ENCODE measurements at regions of chr7 and their contacts with region 1.

Region 1: DNA sequence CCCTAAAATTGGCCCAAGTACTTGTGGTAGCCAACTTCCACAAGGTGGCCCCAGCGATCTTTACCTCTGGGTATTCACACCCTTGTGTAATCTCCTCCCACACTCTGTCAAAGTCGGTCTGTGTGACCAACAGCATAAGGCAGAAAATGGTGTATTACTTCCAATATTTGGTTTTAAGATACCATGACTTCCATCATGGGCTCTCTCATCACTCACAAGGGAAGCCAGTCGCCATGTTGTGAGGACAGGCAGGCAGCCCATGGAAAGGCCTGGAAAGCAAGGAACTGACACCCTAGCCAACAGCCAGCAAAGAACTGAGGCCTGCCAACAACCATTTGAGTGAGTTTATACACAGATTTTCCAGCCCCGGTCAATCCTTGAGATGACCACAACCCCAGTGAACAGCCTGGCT is 91.0 kb upstream of the KMT2E start:
- DNase-seq: peak; percentile 74
- H3K4me3 ChIP-seq: no peak overlapping the region; a peak in 1 of 4 replicates
- H3K27ac ChIP-seq: no peak overlapping the region; a peak in 1 of 4 replicates
- H3K4me1 ChIP-seq: no peaks in the 10 kb centered on the region; a peak in 2 of 4 replicates
- H3K27me3 ChIP-seq: no peaks in the 10 kb centered on the region; the same call in 1 of the 2 replicates
- CTCF ChIP-seq: peak; percentile 92
- EP300 ChIP-seq: 0 out of 4 replicates have a peak, but pooled peaks of 1 of the 2 experiments have one; percentile 12
- RAD21 ChIP-seq: peak; percentile 99

Region 2: GRCh38 chr7:103524042-103524907 is 1398.7 kb before region 1 on chr7:
- CTCF ChIA-PET with region 1: interaction called, 11 read pairs
- POLR2A ChIA-PET with region 1: no interaction called
- DNase-seq: peak; percentile 72
- H3K4me3 ChIP-seq: no peak overlapping the region; a peak in 1 of 4 replicates
- H3K27ac ChIP-seq: no peak overlapping the region
- H3K4me1 ChIP-seq: peaks cover 0 to 5% of the 10 kb centered on the region in 2 experiments; a peak in 1 of 4 replicates
- H3K27me3 ChIP-seq: no peaks in the 10 kb centered on the region
- CTCF ChIP-seq: peak; percentile 77
- EP300 ChIP-seq: no peak
- RAD21 ChIP-seq: peak; percentile 99

Region 3: GRCh38 chr7:104469166-104469820 is 453.7 kb before region 1 on chr7:
- CTCF ChIA-PET with region 1: no interaction called
- POLR2A ChIA-PET with region 1: no interaction called
- DNase-seq: no peak
- H3K4me3 ChIP-seq: no peak overlapping the region
- H3K27ac ChIP-seq: no peak overlapping the region
- H3K4me1 ChIP-seq: no peaks in the 10 kb centered on the region
- H3K27me3 ChIP-seq: peaks cover 15% of the 10 kb centered on the region; the same call in 1 of the 2 replicates
- CTCF ChIP-seq: no peak
- EP300 ChIP-seq: no peak
- RAD21 ChIP-seq: no peak

Region 4: GRCh38 chr7:104862719-104863118 is 60.3 kb before region 1 on chr7:
- CTCF ChIA-PET with region 1: interaction called, 28 read pairs
- POLR2A ChIA-PET with region 1: no interaction called
- DNase-seq: peak; percentile 63
- H3K4me3 ChIP-seq: no peak overlapping the region
- H3K27ac ChIP-seq: no peak overlapping the region
- H3K4me1 ChIP-seq: peaks cover 0 to 4% of the 10 kb centered on the region in 2 experiments; a peak in 1 of 4 replicates
- H3K27me3 ChIP-seq: peaks cover 54% of the 10 kb centered on the region
- CTCF ChIP-seq: peak; percentile 58
- EP300 ChIP-seq: no peak
- RAD21 ChIP-seq: peak; percentile 66

Region 5: DNA sequence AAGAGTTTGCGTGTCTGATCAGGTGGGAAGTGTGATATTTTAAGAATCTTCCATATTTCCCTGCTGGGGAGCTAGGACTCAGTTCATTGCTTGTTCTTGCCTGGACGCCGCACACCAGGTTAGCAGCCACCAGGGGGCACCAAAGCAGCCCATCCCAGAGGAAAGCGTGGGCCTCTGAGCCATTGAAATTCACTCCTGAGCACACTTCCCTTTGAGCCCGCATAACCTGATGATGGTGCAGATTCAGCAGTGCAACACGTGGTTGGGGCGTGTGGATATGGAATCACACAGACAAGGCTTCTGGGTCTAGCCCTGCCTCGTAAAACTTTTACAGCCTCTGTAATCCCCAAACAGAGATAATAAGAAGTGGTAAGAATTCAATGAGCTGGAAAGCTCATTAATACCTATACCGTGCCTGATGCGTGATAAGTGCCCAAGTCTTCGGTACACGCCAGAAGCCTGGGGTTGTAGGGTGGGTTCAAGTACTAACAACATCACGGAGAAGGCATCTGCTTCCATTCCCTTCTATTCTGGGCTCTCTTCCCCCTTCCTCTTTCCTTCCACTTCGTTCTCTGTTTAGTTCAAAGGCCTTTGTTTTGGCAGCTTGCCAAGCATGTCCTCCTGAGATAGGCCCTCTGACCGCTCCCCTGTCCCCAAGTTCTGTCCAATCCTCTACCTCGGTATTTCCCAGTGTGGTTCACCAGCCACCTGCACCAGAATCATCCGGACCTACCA is 39.1 kb before region 1 on chr7:
- CTCF ChIA-PET with region 1: interaction called, 374 read pairs
- POLR2A ChIA-PET with region 1: interaction called, 3 read pairs
- DNase-seq: peak; percentile 84
- H3K4me3 ChIP-seq: no peak overlapping the region
- H3K27ac ChIP-seq: no peak overlapping the region
- H3K4me1 ChIP-seq: no peaks in the 10 kb centered on the region; a peak in 1 of 4 replicates
- H3K27me3 ChIP-seq: peaks cover 26% of the 10 kb centered on the region; the same call in 1 of the 2 replicates
- CTCF ChIP-seq: peak; percentile 99
- EP300 ChIP-seq: no peak
- RAD21 ChIP-seq: peak; percentile 84

Region 6: GRCh38 chr7:104895522-104896236 is 27.3 kb before region 1 on chr7:
- CTCF ChIA-PET with region 1: interaction called, 374 read pairs
- POLR2A ChIA-PET with region 1: no interaction called
- DNase-seq: no peak
- H3K4me3 ChIP-seq: no peak overlapping the region
- H3K27ac ChIP-seq: no peak overlapping the region
- H3K4me1 ChIP-seq: peaks cover 0 to 2% of the 10 kb centered on the region in 2 experiments; a peak in 2 of 4 replicates
- H3K27me3 ChIP-seq: peaks cover 41% of the 10 kb centered on the region
- CTCF ChIP-seq: no peak
- EP300 ChIP-seq: 0 out of 4 replicates have a peak, but pooled peaks of 1 of the 2 experiments have one; percentile 1
- RAD21 ChIP-seq: no peak

Region 7: DNA sequence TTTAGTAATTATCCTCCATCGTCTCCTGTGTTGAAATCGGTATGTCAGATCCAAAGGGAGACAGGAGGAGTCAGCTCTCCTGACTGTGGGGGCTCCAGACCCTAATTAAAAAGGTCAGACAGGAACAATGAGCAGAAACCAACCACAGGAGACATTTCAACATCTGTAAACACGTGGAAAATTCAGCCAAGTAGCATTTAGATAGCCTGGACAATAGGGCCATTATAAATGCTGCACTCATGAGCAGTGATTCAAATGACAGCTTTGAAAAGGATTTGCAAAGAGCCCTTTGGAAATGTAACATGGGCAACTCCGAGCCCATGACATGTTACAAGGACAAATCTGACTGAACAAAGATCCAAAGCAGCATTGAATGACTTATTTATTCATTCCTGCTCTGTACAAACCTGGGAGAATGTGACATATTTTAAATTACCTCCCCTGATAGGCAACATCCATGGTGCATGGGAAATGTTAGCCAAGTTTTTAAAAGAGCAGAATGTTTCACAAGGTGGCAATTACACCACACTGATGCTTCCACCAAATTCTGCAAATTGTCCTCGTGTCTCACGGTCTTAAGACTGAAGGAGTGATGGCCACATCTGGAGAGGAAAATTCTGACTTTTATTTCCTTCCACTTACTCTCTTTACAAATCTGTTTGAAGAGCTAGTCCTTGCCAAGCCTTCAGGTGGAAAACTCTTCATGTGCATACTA is 22.3 kb before region 1 on chr7:
- CTCF ChIA-PET with region 1: interaction called, 30 read pairs
- POLR2A ChIA-PET with region 1: no interaction called
- DNase-seq: no peak
- H3K4me3 ChIP-seq: no peak overlapping the region
- H3K27ac ChIP-seq: no peak overlapping the region
- H3K4me1 ChIP-seq: no peaks in the 10 kb centered on the region; a peak in 2 of 4 replicates
- H3K27me3 ChIP-seq: peaks cover 26% of the 10 kb centered on the region
- CTCF ChIP-seq: no peak
- EP300 ChIP-seq: no peak
- RAD21 ChIP-seq: no peak

Region 8: DNA sequence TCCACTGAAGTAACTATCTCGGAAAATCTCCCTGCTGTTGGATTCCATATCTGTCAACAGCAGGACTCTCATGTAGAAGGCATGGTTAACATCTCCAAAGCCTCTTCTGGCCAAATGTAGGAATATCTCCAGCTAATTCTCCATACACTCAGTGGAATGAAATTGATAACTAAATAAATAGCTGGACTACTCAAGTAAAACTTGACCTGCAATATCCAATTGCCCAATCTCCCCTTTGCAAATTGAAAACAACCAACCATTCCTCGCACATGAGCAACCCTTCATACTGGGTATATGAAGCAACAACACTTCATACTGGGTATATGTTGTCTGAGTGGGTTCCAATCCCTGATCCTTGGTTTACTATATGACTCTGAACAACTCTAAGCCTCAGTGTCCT is 14.4 kb before region 1 on chr7:
- CTCF ChIA-PET with region 1: interaction called, 65 read pairs
- POLR2A ChIA-PET with region 1: no interaction called
- DNase-seq: no peak
- H3K4me3 ChIP-seq: no peak overlapping the region
- H3K27ac ChIP-seq: no peak overlapping the region
- H3K4me1 ChIP-seq: no peaks in the 10 kb centered on the region
- H3K27me3 ChIP-seq: no peaks in the 10 kb centered on the region; the same call in 1 of the 2 replicates
- CTCF ChIP-seq: no peak
- EP300 ChIP-seq: no peak
- RAD21 ChIP-seq: no peak

Measured in SK-N-SH (cell line).